Activated T-helper 1 cell treated with anti-CD3 and anti-CD28 coated beads, Interleukin-12 subunit alpha, Interleukin-12 subunit beta, Interleukin-2, Interleukin-4 antibody, amounts not matched to agents 30 ng/mL and 10 ng/mL and 1 ng/mL, durations not matched to agents 14 hours and 24 hours and 36 hours (primary cell): ENCODE measurements at regions of chr10 and their contacts with region 1.

Region 1: DNA sequence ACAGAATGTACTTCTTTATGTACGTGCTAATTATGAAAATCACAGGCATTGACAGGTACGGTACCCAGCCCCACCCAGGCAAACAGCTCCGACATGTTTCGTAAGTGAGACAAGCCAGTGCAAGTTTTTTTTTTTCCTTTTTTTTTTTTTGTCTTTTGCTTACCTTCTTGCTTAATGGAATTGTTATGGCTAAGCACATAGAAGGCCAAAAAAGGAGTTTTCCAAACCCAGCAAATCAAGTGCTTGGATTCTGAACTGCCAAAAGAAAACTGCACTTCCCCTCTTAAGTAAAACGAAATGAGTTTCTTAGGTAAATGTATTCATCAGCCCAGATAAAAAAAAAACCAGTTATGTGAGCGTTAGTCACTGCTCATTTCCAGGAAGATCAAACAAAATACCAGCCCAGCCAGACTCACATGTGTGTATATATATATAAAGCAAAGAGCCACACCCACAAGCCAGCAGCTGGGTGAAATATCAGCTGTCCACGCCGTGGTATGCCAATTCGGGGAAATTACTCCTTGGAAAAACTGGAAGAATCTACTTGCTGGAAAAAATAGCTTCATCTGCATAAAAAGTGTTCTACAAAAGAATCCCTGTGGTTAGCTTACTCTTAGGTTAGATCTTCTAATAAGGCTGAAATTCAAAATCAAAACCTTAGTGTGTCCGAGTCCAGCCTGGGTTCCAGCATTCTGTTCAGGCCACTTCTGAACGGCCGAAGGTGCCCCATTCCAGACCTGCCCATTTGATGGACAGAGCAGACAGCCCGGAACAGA is 8.0 kb downstream of the KLF6 start:
- DNase-seq: peak; percentile 60
- H3K4me3 Mint-ChIP-seq: peak overlapping the region; percentile 37
- H3K27ac Mint-ChIP-seq: peak overlapping the region; percentile 53
- H3K4me1 Mint-ChIP-seq: peaks cover 81% of the 10 kb centered on the region
- H3K27me3 Mint-ChIP-seq: no peaks in the 10 kb centered on the region

Region 2: GRCh38 chr10:3226960-3227744 is 549.8 kb before region 1 on chr10:
- intact Hi-C with region 1: loop called (anchors 5 kb)
- DNase-seq: no peak
- H3K4me3 Mint-ChIP-seq: no peak overlapping the region
- H3K27ac Mint-ChIP-seq: no peak overlapping the region
- H3K4me1 Mint-ChIP-seq: peaks cover 18% of the 10 kb centered on the region
- H3K27me3 Mint-ChIP-seq: peaks cover 18% of the 10 kb centered on the region

Region 3: GRCh38 chr10:3563298-3563697 is 213.7 kb before region 1 on chr10:
- intact Hi-C with region 1: loop called (anchors 1 kb)
- DNase-seq: no peak
- H3K4me3 Mint-ChIP-seq: no peak overlapping the region
- H3K27ac Mint-ChIP-seq: peak overlapping the region; percentile 49
- H3K4me1 Mint-ChIP-seq: peaks cover 28% of the 10 kb centered on the region
- H3K27me3 Mint-ChIP-seq: peaks cover 7% of the 10 kb centered on the region

Region 4: DNA sequence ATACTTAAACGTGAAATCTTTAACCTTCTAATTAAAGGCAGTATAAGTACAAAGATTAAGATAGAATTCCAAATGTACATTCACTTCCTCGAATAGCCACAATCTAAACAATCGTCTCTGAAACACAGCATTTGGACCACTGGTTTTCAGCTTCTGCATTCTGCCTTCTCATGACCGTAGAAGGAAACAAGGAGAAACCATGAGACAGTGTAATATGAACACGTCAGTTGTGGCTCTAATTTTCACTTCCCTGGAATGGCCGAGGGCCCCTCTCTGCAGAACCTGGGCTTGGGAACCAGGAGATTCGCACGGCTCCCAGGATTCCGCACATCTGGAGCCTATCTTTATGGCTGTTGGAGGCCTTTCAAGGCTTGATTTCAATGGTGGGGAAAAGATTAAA is 181.2 kb before region 1 on chr10:
- intact Hi-C with region 1: no loop called
- DNase-seq: no peak
- H3K4me3 Mint-ChIP-seq: no peak overlapping the region
- H3K27ac Mint-ChIP-seq: no peak overlapping the region
- H3K4me1 Mint-ChIP-seq: no peaks in the 10 kb centered on the region
- H3K27me3 Mint-ChIP-seq: peaks cover 23% of the 10 kb centered on the region

Region 5: DNA sequence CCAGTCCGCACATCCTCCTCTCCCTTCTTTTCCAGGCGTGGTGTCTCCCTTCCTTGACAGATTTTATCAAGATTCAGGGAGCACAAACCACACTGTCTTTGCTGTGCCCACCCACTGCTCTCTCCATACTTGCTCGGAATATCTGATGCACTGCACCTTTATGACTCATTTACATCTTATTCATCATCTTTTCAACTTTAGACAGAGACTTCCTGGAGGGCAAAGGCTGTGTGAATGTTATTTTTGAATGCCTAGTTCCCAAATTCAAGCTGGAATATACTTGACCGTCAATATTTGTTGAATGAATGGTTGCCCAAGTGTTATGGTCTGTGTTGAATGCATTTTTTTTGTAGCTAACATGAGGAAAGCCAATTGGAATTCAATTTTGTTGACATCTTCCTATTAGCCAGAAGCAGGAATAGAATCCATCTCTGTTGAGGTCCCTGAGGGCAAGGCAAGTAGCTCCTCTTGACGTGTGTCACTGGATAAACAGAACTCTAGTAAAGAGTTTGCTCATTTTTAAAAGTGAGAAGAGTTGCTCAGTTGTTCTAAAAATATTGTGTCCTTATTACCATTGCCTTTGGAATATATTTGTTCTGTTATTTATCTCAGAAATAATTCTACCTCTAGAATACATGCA is 87.0 kb before region 1 on chr10:
- intact Hi-C with region 1: loop called (anchors 5 kb)
- DNase-seq: no peak
- H3K4me3 Mint-ChIP-seq: no peak overlapping the region
- H3K27ac Mint-ChIP-seq: peak overlapping the region; percentile 72
- H3K4me1 Mint-ChIP-seq: peaks cover 13% of the 10 kb centered on the region
- H3K27me3 Mint-ChIP-seq: peaks cover 2% of the 10 kb centered on the region

Region 6: GRCh38 chr10:3765146-3765545 is 11.8 kb before region 1 on chr10:
- intact Hi-C with region 1: loop called (anchors 1 kb)
- DNase-seq: peak; percentile 63
- H3K4me3 Mint-ChIP-seq: peak overlapping the region; percentile 65
- H3K27ac Mint-ChIP-seq: peak overlapping the region; percentile 80
- H3K4me1 Mint-ChIP-seq: peaks cover 79% of the 10 kb centered on the region
- H3K27me3 Mint-ChIP-seq: no peaks in the 10 kb centered on the region

Region 7: DNA sequence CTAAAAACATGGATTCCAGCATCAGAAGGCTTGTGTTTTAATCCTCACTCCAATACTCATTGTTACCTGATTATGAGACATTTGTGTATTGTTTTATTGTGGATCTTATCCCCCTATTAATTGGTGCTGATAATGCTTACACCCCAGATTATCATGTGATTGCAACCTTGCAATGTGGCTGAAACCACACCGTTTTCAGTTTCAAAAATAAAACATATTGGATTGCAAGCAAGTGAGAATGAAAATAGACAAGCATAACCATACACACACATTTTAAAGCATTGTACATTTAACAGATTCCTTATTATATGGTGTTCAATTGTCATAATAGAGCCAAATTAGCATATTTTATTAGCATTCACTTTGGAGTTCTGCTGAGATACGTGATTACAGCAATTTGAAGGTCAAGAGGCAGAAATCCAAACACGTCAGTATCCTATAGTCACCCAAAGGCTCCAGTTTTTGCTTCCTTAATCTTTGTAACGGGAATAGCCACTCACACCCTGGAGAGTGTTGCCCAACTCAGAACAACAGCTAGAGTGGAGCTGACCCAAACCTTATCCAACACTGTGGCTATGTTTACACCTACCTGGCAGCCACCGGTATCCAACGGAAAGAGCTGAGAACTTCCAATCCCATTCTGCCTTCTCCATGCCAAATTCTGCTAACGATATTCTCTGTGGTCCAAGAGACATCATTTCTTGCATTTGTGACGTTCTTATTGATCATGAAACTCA is 325.1 kb after region 1 on chr10:
- intact Hi-C with region 1: no loop called
- DNase-seq: no peak
- H3K4me3 Mint-ChIP-seq: no peak overlapping the region
- H3K27ac Mint-ChIP-seq: no peak overlapping the region
- H3K4me1 Mint-ChIP-seq: peaks cover 17% of the 10 kb centered on the region
- H3K27me3 Mint-ChIP-seq: peaks cover 2% of the 10 kb centered on the region